ENCODE measurements at regions of chr3 and their contacts with region 1.

Region 1: DNA sequence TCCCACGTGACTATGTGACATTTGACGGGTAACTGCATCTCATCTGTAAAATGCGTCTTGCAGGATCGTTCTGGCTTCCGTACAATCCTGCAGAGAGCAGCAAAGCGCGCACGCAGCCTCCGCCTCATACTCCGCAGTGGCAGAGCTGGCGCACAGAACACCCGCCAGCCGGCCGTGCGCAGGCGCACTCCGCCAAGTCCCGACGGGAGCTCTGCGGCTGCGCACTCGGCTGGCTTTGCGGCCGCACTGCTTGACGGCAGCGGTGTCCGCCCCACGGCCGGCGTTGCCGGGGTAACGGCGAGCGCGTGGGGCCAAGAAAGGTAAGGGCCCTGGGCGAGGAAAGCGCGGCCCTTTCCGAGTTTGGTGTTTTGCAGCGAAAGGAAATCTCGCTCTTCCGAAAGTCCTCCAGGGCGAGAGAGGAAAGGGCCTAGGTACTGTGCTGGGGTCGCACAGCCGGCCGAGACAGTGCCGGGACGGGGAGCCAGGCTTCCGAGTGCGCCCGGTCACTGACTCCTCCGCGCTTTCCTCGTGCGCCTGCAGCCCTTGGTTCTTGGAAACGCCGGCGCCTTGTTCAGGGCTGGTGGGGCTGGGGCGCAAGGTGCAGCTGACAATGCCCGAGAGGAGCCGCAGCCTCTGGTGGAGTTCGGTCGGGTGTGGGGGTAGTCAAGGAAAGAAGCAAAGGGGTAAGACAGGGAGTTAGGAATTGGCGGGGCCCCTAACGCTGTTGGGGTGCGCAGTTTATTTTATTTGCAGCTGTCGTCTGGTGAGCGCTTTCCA is at the start of gene TSEN2:
- DNase-seq: peak; percentile 95 to 100 (median 98)
- ATAC-seq: peak; percentile 96
- H3K4me3 ChIP-seq: peak within 1 kb of the TSS; percentile 76
- H3K4me3 Mint-ChIP-seq: peak within 1 kb of the TSS; percentile 87 to 99 (median 97)
- H3K27ac ChIP-seq: peak within 1 kb of the TSS; percentile 92
- H3K27ac Mint-ChIP-seq: peak within 1 kb of the TSS; percentile 96 to 99 (median 98)
- H3K4me1 ChIP-seq: peaks cover 17% of the 10 kb centered on the region in 2 donors
- H3K4me1 Mint-ChIP-seq: peaks cover 21 to 65% (median 44%) of the 10 kb centered on the region in 7 donors
- H3K27me3 ChIP-seq: no peaks in the 10 kb centered on the region
- H3K27me3 Mint-ChIP-seq: peaks cover 0 to 2% (median 0%) of the 10 kb centered on the region in 5 donors
- total RNA-seq, gene TSEN2: 12.1 to 27.5 (median 13.6) TPM

Region 2: DNA sequence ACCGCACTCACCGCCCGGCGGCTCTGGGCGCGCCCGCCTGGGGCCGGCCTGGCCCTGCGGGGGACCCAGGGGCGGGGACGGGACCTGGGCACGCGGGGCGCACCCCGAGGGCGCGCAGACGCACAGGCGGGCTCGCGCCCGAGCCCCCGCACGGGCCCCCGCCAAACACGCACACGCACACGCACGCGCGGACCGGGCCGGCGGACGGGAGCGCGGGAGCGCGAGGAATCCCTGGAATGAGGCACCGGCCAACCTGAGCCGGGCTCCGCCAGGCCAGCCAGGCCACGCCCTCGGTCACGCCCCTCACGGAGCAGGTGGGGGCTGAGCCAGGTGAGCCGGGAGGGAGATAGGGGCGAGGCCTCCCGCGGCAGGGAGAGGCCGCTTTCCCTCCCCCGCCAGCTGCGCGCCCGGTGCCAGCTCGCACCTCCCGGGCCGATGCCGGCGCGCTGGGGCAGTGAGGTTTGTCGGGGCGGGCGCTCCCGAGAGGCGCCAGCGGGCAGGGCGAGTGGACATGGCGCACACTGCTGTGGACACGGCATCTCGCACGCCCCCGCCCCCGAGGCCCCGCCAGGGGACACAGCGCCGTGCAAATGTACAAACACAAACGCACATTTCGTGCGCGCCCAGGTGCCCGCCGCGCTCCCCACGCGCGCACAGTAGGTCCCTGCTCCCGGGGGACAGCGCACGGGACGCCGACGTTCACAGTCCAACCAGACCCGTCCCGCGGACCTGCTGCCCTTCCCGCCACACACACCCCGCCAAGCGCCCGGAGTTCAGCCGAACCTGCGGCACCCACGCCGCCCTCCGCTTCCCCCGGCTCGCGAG is 764.8 kb before region 1 on chr3:
- CTCF ChIA-PET with region 1: no interaction called
- POLR2A ChIA-PET with region 1: no interaction called
- intact Hi-C with region 1: loop called in 1 of 2 experiments (anchors 5 kb)
- DNase-seq: peak; percentile 58 to 77 (median 67)
- ATAC-seq: peak; percentile 86
- H3K4me3 ChIP-seq: peak overlapping the region; percentile 74
- H3K4me3 Mint-ChIP-seq: peak overlapping the region; percentile 59 to 95 (median 82)
- H3K27ac ChIP-seq: peak overlapping the region; percentile 75
- H3K27ac Mint-ChIP-seq: peak overlapping the region in 1 of 9 donors; percentile 62
- H3K4me1 ChIP-seq: peaks cover 6 to 8% of the 10 kb centered on the region in 2 donors
- H3K4me1 Mint-ChIP-seq: peaks cover 14 to 30% (median 20%) of the 10 kb centered on the region in 7 donors
- H3K27me3 ChIP-seq: no peaks in the 10 kb centered on the region
- H3K27me3 Mint-ChIP-seq: peaks cover 2 to 34% (median 10%) of the 10 kb centered on the region in 5 donors

Region 3: DNA sequence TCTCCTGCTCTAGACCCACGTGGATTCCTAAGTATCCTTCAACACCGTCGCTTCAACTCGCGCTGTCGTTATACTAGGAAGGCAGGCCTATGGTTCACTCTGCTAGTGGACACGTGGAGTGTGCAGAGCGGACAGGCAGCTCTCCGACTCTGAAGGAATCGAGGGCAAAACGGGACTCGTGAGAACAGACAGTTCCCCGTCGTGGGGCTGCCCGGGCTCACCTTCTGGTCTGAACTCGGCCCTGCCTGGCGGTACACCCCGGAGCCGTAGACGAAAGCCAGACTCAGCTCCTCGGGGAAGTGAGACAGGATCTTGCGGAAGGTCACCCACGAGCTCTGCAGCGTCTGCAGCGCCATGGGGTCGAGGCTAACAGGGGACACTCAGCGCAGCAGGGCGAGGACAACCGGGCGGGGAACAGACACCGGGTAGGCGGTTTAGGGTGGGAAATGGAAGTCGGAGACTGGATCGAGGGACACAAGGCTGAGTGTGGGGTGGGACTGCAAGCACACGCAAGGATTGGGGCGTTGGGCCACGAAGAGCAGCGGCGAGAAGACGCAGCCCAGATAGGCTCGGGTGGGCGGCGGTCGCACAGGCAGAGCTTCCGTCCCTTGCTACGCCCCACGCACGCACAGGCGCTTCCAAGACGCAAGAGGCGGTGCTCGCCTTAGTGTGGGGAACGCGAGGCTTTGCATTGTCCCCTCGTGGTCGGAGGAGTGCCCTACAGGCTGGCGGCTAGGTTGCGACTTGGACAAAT is 637.9 kb before region 1 on chr3 and contains the start of gene TAMM41:
- CTCF ChIA-PET with region 1: interaction called, 3 read pairs
- POLR2A ChIA-PET with region 1: interaction called, 11 read pairs
- intact Hi-C with region 1: loop called in 1 of 2 experiments (anchors 1 kb)
- DNase-seq: peak; percentile 68 to 88 (median 85)
- ATAC-seq: peak; percentile 100
- H3K4me3 ChIP-seq: peak within 1 kb of the TSS; percentile 92
- H3K4me3 Mint-ChIP-seq: peak within 1 kb of the TSS; percentile 93 to 99 (median 98)
- H3K27ac ChIP-seq: peak within 1 kb of the TSS; percentile 90
- H3K27ac Mint-ChIP-seq: peak within 1 kb of the TSS; percentile 90 to 98 (median 96)
- H3K4me1 ChIP-seq: peaks cover 23 to 31% of the 10 kb centered on the region in 2 donors
- H3K4me1 Mint-ChIP-seq: peaks cover 21 to 62% (median 54%) of the 10 kb centered on the region in 7 donors
- H3K27me3 ChIP-seq: no peaks in the 10 kb centered on the region
- H3K27me3 Mint-ChIP-seq: peaks cover 0 to 12% (median 0%) of the 10 kb centered on the region in 5 donors
- total RNA-seq, gene TAMM41: 24.4 to 58.0 (median 28.6) TPM

Region 4: DNA sequence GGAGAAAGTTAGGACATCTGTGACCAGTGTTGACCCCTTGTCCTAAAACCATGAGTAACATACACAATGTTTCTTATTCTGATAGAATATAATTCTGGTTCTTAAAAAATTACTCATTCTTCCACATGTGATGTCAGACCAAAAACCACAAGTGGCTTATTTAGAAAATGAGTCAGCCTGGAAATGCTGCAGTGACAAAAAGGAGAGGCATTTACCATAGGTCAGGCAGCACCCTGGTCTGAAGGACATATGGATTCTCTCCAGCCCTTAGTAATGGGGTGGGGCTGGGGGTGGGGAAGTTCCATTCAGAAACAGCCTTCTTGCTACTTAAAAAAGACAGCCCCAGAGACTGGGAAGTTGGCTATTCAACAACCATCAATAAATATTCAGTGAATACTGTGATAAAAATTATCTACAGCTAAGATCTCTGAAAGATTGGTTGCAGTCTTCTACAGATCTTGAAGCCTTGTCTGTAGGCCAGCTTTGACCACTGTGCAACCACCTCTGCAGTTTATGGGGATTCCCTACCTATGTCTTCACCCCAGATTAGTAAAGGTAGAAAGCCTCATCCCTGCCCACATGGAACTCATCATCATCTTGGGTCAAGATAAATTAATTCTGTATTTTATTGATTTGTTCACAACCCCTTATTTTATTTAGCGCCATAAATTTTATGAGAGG is 290.8 kb before region 1 on chr3:
- CTCF ChIA-PET with region 1: no interaction called
- POLR2A ChIA-PET with region 1: no interaction called
- intact Hi-C with region 1: loop called in 1 of 2 experiments (anchors 5 kb)
- DNase-seq: no peak
- ATAC-seq: peak; percentile 90
- H3K4me3 ChIP-seq: no peak overlapping the region
- H3K4me3 Mint-ChIP-seq: no peak overlapping the region
- H3K27ac ChIP-seq: no peak overlapping the region
- H3K27ac Mint-ChIP-seq: peak overlapping the region in 1 of 9 donors; percentile 7
- H3K4me1 ChIP-seq: no peaks in the 10 kb centered on the region
- H3K4me1 Mint-ChIP-seq: peaks cover 0 to 41% (median 0%) of the 10 kb centered on the region in 7 donors
- H3K27me3 ChIP-seq: no peaks in the 10 kb centered on the region
- H3K27me3 Mint-ChIP-seq: peaks cover 0 to 10% (median 0%) of the 10 kb centered on the region in 5 donors

Region 5: DNA sequence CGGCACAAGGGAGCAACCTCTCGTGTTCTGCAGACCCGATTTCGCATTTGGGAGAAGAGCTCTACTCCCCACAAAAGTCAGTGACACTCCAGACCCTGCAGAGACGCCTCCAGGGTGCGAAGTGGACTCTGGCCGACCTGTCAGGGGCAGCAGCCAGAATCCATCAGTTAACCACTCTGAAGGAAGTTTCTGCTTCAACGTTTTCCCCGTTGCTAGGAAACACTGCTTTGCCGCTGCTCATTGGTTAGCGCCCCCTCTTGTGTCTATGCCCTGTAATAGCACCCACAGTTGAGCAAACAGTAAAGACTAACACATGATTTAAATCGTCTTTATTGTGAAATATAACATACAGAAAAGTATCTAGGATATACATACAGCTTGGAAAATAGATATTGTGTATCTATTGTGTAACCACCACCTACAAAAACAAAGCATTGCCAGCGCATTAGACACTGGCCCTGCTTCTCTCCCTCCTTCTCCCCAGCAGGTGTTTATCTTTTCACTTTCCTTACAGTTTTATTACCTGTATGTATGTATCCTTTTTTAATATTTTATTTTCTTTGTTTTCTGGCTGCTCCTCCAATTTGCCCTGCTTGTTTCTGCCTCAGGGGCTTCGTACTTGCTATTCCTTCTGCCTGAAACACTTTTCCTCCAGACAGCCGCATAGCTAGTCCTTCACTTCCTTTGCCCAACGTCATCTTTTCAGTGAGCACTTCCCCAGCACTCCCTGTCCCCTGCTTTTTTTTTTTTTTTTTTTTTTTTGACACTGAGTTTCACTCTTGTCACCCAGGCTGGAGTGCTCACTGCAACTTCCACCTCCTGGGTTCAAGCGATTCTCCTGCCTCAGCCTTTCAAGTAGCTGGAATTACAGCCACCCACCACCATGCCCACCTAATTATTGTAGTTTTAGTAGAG is 235.9 kb after region 1 on chr3:
- CTCF ChIA-PET with region 1: no interaction called
- POLR2A ChIA-PET with region 1: interaction called, 4 read pairs
- intact Hi-C with region 1: loop called (anchors 1 to 5 kb)
- DNase-seq: peak; percentile 37 to 85 (median 81)
- ATAC-seq: peak; percentile 98
- H3K4me3 ChIP-seq: peak overlapping the region; percentile 50
- H3K4me3 Mint-ChIP-seq: peak overlapping the region; percentile 30 to 79 (median 72)
- H3K27ac ChIP-seq: no peak overlapping the region
- H3K27ac Mint-ChIP-seq: peak overlapping the region; percentile 46 to 93 (median 74)
- H3K4me1 ChIP-seq: peaks cover 0 to 5% of the 10 kb centered on the region in 2 donors
- H3K4me1 Mint-ChIP-seq: peaks cover 6 to 12% (median 9%) of the 10 kb centered on the region in 7 donors
- H3K27me3 ChIP-seq: no peaks in the 10 kb centered on the region
- H3K27me3 Mint-ChIP-seq: no peaks in the 10 kb centered on the region

Region 6: DNA sequence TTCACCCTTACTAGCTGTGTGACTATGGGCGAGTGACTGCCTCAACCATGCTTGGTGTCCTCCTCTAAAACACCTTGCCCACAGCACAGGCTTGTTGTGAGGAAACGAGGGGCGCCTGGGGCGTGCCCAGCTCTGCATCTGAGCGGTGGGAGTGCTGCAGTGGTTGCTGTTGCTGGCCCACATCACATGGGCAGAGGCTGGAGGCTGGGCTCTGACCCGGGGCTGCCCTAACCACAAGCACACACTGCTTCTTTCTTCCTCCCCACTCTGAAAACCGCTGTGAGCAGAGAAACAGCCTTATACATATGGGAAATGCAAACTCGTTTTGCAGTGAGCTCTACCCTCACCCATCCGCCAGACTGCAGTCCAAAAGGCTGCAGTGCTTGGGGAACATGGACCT is 431.8 kb after region 1 on chr3:
- CTCF ChIA-PET with region 1: no interaction called
- POLR2A ChIA-PET with region 1: no interaction called
- intact Hi-C with region 1: no loop called
- DNase-seq: peak in 5 of 9 donors; percentile 8 to 29 (median 24)
- ATAC-seq: peak; percentile 78
- H3K4me3 ChIP-seq: no peak overlapping the region
- H3K4me3 Mint-ChIP-seq: peak overlapping the region in 9 of 10 donors; percentile 34 to 61 (median 48)
- H3K27ac ChIP-seq: no peak overlapping the region
- H3K27ac Mint-ChIP-seq: peak overlapping the region; percentile 38 to 87 (median 75)
- H3K4me1 ChIP-seq: peaks cover 12 to 24% of the 10 kb centered on the region in 2 donors
- H3K4me1 Mint-ChIP-seq: peaks cover 17 to 30% (median 24%) of the 10 kb centered on the region in 7 donors
- H3K27me3 ChIP-seq: no peaks in the 10 kb centered on the region
- H3K27me3 Mint-ChIP-seq: no peaks in the 10 kb centered on the region

Measured in naive thymus-derived CD4-positive, alpha-beta T cell (primary cell).